ENCODE measurements at regions of chr4 and their contacts with region 1.

Region 1: GRCh38 chr4:52665592-52665991 is 6.5 kb upstream of the USP46 start:
- DNase-seq: no peak
- H3K4me3 ChIP-seq: no peak overlapping the region
- H3K27ac ChIP-seq: no peak overlapping the region
- H3K4me1 ChIP-seq: peaks cover 8% of the 10 kb centered on the region
- H3K27me3 ChIP-seq: no peaks in the 10 kb centered on the region
- CTCF ChIP-seq: peak; percentile 8 to 51

Region 2: GRCh38 chr4:52234561-52235440 is 430.8 kb before region 1 on chr4:
- CTCF ChIA-PET with region 1: no interaction called
- dilution Hi-C with region 1: no loop called
- in situ Hi-C with region 1: no loop called
- intact Hi-C with region 1: loop called (anchors 2 kb)
- DNase-seq: peak; percentile 41
- H3K4me3 ChIP-seq: no peak overlapping the region
- H3K27ac ChIP-seq: no peak overlapping the region
- H3K4me1 ChIP-seq: no peaks in the 10 kb centered on the region
- H3K27me3 ChIP-seq: peaks cover 5% of the 10 kb centered on the region
- CTCF ChIP-seq: peak; percentile 58 to 68

Region 3: DNA sequence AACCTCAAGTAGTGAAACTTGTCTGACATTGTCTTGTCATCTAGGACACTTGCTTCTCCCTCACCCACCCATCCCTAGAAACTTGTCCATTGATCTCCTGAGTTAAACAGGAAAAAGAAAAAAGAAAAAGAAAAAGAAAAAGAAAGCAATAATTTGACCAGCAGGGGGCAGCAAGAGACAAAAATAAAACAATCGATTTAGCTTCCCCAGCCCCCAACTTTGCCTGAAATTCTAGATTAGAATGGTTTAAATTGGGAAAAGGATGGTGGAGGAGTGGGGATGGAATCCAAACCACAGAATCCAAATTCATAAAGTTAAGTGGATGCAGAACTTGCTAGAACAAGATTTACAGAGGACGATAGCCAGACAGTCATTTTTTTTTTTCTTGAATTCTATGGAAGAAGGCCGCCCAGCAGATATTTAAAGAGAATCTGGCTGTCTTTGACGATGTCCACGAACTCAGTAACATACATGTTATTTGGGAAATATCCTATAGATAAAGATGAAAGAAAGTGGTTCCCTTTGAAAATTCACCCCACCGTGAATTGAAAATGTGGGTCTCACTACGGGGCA is 289.4 kb before region 1 on chr4:
- CTCF ChIA-PET with region 1: no interaction called
- dilution Hi-C with region 1: no loop called
- in situ Hi-C with region 1: no loop called
- intact Hi-C with region 1: loop called (anchors 1 kb)
- DNase-seq: peak; percentile 29
- H3K4me3 ChIP-seq: no peak overlapping the region
- H3K27ac ChIP-seq: no peak overlapping the region
- H3K4me1 ChIP-seq: no peaks in the 10 kb centered on the region
- H3K27me3 ChIP-seq: no peaks in the 10 kb centered on the region
- CTCF ChIP-seq: peak; percentile 37 to 55

Region 4: GRCh38 chr4:52588097-52588782 is 77.4 kb before region 1 on chr4:
- CTCF ChIA-PET with region 1: no interaction called
- dilution Hi-C with region 1: no loop called
- in situ Hi-C with region 1: no loop called
- intact Hi-C with region 1: loop called (anchors 1 kb)
- DNase-seq: no peak
- H3K4me3 ChIP-seq: no peak overlapping the region
- H3K27ac ChIP-seq: peak overlapping the region; percentile 25
- H3K4me1 ChIP-seq: peaks cover 19% of the 10 kb centered on the region
- H3K27me3 ChIP-seq: no peaks in the 10 kb centered on the region
- CTCF ChIP-seq: peak; percentile 39 to 45

Region 5: DNA sequence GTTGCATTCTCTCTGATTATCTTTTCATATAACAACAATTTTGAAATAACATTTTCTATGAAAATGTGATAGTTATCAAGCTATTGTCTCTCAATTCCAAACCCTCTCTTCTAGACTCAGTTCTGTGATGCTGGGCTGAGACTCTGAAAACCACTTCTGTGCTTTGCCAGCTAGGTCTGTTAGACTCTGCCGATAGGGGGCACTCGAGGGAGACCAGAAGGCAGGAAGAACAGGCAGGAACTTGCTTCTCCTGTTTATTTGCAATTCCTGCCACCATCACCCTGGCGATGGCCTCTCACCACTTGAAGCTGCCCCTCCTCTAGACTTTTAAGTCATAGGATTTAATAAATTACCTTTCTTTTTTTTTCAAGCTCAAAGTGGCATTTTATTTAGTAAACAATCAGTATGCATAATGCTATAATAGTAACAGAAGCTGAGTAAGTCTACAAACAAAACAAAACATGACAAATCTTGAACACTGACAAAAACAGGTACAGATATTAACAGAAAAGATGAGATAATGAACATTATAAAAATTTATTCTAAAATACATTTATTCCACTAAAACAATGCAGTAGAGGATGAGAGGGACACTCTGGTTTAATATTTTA is 246.2 kb after region 1 on chr4:
- CTCF ChIA-PET with region 1: no interaction called
- dilution Hi-C with region 1: no loop called
- in situ Hi-C with region 1: no loop called
- intact Hi-C with region 1: loop called (anchors 5 kb)
- DNase-seq: peak; percentile 73
- H3K4me3 ChIP-seq: no peak overlapping the region
- H3K27ac ChIP-seq: no peak overlapping the region
- H3K4me1 ChIP-seq: peaks cover 3% of the 10 kb centered on the region
- H3K27me3 ChIP-seq: no peaks in the 10 kb centered on the region
- CTCF ChIP-seq: peak; percentile 94 to 95

Measured in mammary epithelial cell (primary cell).